Activated CD8-positive, alpha-beta memory T cell treated with anti-CD3 and anti-CD28 coated beads, Interleukin-2, amount 10 ng/mL, durations not matched to agents 7 days and 5 days (primary cell): ENCODE measurements at regions of chr17 and their contacts with region 1.

Region 1: GRCh38 chr17:4249452-4250029 is 14.2 kb downstream of the ANKFY1 start:
- DNase-seq: no peak
- ATAC-seq: peak; percentile 36
- H3K4me3 Mint-ChIP-seq: no peak overlapping the region
- H3K27ac Mint-ChIP-seq: peak overlapping the region; percentile 7
- H3K4me1 Mint-ChIP-seq: peaks cover 38% of the 10 kb centered on the region
- H3K27me3 Mint-ChIP-seq: no peaks in the 10 kb centered on the region

Region 2: DNA sequence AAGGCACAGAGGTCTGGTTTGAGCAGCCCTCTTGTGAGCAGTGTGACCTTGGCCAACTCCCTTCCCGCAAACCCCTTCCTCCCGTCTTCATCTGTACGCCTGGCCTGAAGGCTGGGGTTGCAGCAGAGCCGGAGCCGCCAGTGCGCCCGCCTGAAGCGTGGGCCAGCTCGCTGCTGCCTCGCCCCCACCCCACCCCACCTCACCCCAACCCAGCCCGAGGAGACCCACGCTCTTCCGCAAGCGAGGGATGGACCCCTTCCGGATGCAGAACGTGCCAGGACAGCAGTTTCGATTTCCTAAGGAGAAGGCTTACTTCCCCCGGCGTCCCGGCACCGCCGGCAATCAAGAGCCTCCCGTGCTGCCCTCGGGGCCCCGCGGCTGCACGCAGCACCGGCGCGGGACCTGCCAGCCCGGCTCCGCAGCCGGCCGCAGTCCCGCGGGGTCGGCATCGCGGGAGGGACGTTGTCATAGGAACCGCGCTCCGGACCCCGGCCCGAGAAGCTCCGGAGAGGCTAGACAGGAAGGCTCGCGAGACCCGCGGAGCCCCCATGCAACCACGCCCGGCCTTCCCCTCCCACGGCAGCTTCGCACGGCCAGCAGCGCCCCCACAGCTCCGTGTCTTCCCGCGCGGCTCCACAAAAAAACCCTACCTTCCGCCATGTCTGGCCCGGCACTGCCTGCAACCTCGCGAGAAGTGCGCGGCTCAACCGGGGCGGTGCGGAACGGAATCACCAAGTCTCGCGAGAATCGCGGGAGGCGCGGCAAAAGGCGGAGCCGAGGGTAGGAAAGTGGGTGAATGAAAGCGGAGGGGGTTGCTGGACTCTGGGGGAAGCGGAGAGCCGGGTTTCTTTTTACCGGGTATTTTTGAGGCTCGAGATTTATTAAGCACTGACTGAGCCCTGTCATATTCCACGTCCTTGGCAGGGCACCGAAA is 14.0 kb after region 1 on chr17 and contains the start of gene ANKFY1:
- CTCF ChIA-PET with region 1: interaction called, 28 read pairs
- DNase-seq: peak; percentile 98
- ATAC-seq: peak; percentile 95
- H3K4me3 Mint-ChIP-seq: peak within 1 kb of the TSS; percentile 80
- H3K27ac Mint-ChIP-seq: peak within 1 kb of the TSS; percentile 89
- H3K4me1 Mint-ChIP-seq: peaks cover 41% of the 10 kb centered on the region
- H3K27me3 Mint-ChIP-seq: no peaks in the 10 kb centered on the region
- total RNA-seq, gene ANKFY1: 63.8 to 103 TPM